ENCODE measurements at regions of chrX and their contacts with region 1.

Region 1: DNA sequence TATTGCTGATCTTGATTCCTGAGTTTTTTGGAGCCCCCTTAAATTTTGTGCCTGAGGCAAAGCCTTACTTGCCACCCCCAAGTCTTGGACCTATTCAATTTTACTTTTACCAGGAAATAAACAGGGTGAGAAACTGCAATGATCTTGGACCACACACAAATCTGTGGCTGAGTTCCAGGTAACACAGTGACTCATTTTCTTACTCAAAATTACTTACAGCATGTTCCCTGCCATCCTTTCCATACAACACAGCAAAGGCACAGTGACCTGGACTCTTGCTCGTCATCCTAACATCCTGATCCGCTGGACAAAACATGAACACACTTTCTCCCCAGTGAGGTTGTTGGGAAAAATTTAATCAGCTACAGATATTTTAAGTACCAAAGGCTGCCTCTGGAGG is 60.7 kb upstream of the S100G start:
- DNase-seq: no peak

Region 2: GRCh38 chrX:15664487-15665444 is 924.4 kb before region 1 on chrX and contains the start of gene CLTRN:
- intact Hi-C with region 1: no loop called
- DNase-seq: no peak
- total RNA-seq, gene CLTRN: 0.48 to 0.51 TPM

Region 3: DNA sequence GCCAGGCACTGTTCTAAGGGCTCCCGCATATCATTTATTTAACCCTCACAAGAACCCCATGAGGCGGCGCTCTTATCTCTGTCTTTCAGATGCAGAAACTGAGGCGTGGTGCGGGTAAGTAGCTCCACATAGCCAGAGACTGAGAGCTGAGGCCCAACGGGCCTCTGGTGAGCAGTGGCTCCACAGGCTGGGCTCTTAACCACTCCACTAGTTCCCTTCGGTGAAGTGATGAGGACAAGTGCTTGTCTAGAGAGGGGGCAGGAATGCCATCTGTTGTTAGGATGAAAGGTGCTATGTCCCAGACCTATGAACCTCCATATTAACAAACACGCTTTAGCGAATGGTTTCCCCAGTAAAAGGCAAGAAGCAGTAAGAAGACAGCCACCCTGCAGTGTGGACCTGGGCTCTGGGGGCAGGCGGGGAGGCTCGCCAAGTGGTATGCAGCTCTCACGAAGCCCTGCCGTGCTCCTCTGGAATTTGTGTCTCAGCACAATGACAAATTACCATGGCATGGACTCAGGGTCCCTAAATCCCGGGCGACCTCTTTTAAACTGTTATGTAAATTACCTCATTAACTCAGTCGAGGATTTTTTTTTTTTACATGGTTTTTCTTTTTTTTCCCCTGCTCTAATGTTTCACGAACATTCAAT is 39.9 kb after region 1 on chrX:
- intact Hi-C with region 1: loop called in 1 of 2 experiments (anchors 1 kb)
- DNase-seq: no peak

Region 4: GRCh38 chrX:16654093-16654492 is 64.9 kb after region 1 on chrX:
- intact Hi-C with region 1: loop called in 1 of 2 experiments (anchors 2 kb)
- DNase-seq: no peak